ENCODE measurements at regions of chr22 and their contacts with region 1.

Region 1: GRCh38 chr22:42820066-42820763 is 36.9 kb downstream of the ARFGAP3 start:
- DNase-seq: no peak
- H3K4me3 Mint-ChIP-seq: no peak overlapping the region
- H3K27ac Mint-ChIP-seq: no peak overlapping the region
- H3K4me1 Mint-ChIP-seq: peaks cover 5% of the 10 kb centered on the region
- H3K27me3 Mint-ChIP-seq: no peaks in the 10 kb centered on the region

Region 2: GRCh38 chr22:42621505-42622002 is 198.7 kb before region 1 on chr22:
- CTCF ChIA-PET with region 1: interaction called, 16 read pairs
- POLR2A ChIA-PET with region 1: no interaction called
- DNase-seq: peak; percentile 62
- H3K4me3 Mint-ChIP-seq: no peak overlapping the region
- H3K27ac Mint-ChIP-seq: no peak overlapping the region
- H3K4me1 Mint-ChIP-seq: peaks cover 7% of the 10 kb centered on the region
- H3K27me3 Mint-ChIP-seq: no peaks in the 10 kb centered on the region

Region 3: DNA sequence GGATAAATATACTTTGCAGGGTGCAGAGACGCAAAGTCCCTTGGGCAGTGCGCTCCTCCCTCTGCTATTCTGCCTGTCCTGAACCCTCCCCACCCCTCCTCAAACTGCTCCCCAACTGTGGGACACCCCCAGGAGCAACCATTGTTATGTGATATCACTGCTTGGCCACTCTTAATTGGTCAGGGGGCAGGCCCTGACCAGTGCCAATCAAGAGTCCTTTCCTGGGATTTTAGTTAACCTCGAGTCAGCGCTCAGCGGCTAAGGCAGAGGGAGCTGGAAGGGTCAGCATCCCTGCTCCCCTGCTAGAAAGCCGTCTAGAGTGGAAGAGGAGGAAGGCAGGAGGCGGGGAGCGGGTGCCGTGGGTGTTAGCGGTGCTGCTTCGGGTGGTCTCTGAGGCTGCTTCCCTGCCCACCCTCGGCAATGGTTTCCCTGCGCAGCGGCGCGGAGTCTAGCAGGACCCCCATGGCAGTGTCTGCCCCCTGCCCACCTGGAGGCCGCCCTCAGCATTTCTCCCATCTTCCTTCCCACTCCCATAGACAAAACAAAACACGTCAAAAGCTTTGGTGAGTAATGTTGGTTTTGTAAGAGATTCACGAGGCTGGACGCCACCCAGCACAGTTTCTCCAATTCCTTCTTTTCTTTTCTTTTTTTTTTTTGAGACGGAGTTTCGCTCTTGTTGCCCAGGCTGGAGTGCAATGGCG is 61.1 kb before region 1 on chr22:
- CTCF ChIA-PET with region 1: no interaction called
- POLR2A ChIA-PET with region 1: no interaction called
- DNase-seq: no peak
- H3K4me3 Mint-ChIP-seq: no peak overlapping the region
- H3K27ac Mint-ChIP-seq: no peak overlapping the region
- H3K4me1 Mint-ChIP-seq: no peaks in the 10 kb centered on the region
- H3K27me3 Mint-ChIP-seq: peaks cover 2% of the 10 kb centered on the region

Region 4: GRCh38 chr22:42773167-42773566 is 47.0 kb before region 1 on chr22:
- CTCF ChIA-PET with region 1: no interaction called
- POLR2A ChIA-PET with region 1: no interaction called
- DNase-seq: no peak
- H3K4me3 Mint-ChIP-seq: no peak overlapping the region
- H3K27ac Mint-ChIP-seq: no peak overlapping the region
- H3K4me1 Mint-ChIP-seq: no peaks in the 10 kb centered on the region
- H3K27me3 Mint-ChIP-seq: peaks cover 2% of the 10 kb centered on the region

Region 5: GRCh38 chr22:42831712-42832111 is 11.5 kb after region 1 on chr22:
- CTCF ChIA-PET with region 1: interaction called, 12 read pairs
- POLR2A ChIA-PET with region 1: no interaction called
- DNase-seq: no peak
- H3K4me3 Mint-ChIP-seq: no peak overlapping the region
- H3K27ac Mint-ChIP-seq: no peak overlapping the region
- H3K4me1 Mint-ChIP-seq: peaks cover 20% of the 10 kb centered on the region
- H3K27me3 Mint-ChIP-seq: no peaks in the 10 kb centered on the region

Region 6: GRCh38 chr22:42880815-42881214 is 60.6 kb after region 1 on chr22:
- CTCF ChIA-PET with region 1: no interaction called
- POLR2A ChIA-PET with region 1: no interaction called
- DNase-seq: no peak
- H3K4me3 Mint-ChIP-seq: no peak overlapping the region
- H3K27ac Mint-ChIP-seq: no peak overlapping the region
- H3K4me1 Mint-ChIP-seq: no peaks in the 10 kb centered on the region
- H3K27me3 Mint-ChIP-seq: no peaks in the 10 kb centered on the region

Measured in activated CD4-positive, alpha-beta memory T cell treated with anti-CD3 and anti-CD28 coated beads, Interleukin-2, amount 10 ng/mL, durations not matched to agents 7 days and 5 days (primary cell).